GM10248 (cell line): ENCODE measurements at regions of chr6 and their contacts with region 1.

Region 1: DNA sequence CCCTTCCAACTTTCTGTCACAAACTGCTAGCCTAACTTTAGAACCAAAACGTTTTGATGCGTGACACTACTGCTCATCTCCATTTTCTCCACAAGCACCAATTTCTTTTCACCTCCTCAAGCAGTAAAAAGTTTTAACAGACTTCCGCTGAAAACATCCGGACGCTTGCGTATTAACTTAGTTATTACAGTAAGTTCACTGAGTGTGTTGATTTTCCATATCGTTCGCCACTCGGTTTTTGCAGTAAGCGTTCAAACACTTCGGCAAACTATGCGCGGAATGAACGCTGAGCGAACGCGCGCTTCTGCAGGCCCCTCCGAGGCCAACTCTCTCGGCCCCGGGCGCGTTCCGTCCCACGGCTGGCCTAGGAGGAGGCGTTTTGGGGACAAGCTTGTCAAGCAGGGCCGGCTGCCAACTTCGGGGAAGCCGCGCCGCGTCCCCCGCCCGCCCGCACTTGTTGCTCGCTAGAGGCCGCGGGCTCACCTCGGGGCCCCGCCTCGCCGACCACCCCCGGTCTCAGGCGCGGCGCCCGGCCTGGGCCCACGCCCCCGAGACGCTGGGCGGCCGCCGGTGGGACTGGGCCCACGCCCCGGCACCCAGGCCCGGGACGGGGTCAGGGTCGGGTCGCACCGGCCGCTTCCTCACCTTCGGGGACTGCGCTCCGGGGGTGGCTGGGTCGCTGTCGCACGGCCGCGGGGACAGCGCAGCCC is 945 bp downstream of the PHF10 start:
- DNase-seq: peak; percentile 71
- CTCF ChIP-seq: no peak

Region 2: DNA sequence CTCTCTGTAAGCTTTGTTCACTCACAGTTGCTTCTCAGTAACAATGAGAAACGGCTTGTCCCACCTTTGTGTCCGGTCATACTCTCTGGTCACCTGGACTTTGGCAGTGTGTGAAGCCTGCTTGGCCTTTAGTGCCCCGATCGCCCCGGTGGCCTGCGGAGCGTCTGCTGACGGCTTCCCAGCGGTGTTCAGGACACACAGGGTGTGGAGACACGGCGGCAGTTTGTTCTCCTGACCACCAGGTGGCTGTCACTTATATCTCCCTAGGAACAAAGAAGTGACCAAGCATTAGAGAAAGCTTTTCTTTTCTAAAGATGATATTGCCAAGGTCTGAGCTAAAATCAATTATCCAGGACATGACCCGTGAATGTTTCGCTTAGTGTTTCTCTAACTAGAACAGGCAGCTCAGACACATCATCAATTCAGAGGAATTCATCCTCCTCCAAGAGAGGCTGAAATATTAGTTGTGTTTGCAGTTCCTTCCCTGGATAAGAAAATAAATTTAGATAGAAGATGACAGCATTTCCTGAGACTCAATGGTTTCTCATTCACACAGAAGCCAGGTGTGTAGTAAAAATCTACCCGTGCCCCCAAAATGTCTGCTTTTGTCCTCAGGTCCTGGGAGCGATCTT is 302.3 kb before region 1 on chr6:
- CTCF ChIA-PET with region 1: no interaction called
- POLR2A ChIA-PET with region 1: no interaction called
- DNase-seq: no peak
- CTCF ChIP-seq: peak; percentile 3

Region 3: DNA sequence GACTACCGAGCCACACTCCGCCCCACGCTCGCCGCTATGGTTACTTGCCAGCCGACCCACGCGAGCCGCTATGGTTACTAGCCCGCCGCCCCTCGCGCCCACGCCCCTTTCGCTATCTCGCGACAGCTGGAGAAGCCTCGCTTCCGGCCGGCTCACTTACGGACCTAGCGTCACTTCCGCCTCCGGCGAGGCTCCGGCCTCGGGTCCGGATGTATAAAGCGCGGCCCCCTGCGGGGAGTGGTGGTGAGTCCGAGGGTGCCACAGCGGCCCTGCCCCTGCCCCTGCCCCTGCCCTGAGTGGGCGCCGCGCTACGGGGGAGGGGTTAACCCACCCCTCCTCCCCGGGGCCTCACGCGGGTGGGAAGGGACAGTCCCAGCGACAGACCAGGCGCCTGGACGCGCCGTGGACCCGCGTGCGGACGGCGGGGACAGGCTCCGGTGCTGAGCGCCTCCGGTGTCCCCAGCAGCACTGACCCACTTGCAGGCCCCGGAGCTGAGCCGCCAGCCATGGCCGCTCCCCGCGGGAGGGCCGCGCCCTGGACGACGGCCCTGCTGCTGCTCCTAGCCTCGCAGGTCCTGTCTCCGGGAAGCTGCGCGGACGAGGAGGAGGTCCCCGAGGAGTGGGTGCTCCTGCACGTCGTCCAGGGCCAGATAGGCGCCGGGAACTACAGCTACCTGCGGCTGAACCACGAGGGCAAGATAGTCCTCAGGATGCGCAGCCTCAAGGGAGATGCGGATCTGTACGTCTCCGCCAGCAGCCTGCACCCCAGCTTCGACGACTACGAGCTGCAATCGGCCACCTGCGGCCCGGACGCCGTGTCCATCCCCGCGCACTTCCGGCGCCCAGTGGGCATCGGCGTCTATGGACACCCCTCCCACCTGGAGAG is 21.2 kb before region 1 on chr6 and contains the starts of genes C6orf120 and WDR27:
- CTCF ChIA-PET with region 1: interaction called, 15 read pairs
- POLR2A ChIA-PET with region 1: interaction called, 5 read pairs
- DNase-seq: peak; percentile 96
- CTCF ChIP-seq: no peak

Region 4: DNA sequence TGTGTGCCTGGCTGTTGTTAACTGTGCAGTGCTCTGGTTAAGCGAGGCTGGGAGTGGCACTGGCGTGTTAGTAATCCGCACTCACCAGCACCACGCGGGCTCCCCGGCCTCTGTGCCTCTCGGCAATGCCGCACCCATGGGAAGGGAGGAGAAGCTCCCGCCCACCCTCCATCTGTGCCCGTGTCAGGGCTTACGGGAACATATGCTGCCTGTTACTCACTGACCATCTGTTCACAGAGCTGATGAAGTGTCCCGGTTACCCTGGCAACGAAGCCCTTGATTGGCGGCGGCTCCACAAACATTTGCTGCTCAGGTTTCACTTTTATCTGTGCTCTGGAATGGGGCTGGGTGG is 715.0 kb after region 1 on chr6:
- CTCF ChIA-PET with region 1: no interaction called
- POLR2A ChIA-PET with region 1: no interaction called
- DNase-seq: peak; percentile 82
- CTCF ChIP-seq: no peak